ENCODE measurements at regions of chr13 and their contacts with region 1.

Region 1: GRCh38 chr13:25286969-25287961 is at the start of gene MTMR6:
- DNase-seq: peak; percentile 73
- ATAC-seq: peak; percentile 98
- H3K4me3 ChIP-seq: peak within 1 kb of the TSS; percentile 90 to 98 (median 92)
- H3K27ac ChIP-seq: peak within 1 kb of the TSS; percentile 70
- H3K4me1 ChIP-seq: peaks cover 28% of the 10 kb centered on the region
- H3K27me3 ChIP-seq: peaks cover 0 to 16% of the 10 kb centered on the region in 2 experiments; a peak in 1 of 5 replicates
- CTCF ChIP-seq: peak; percentile 98
- EP300 ChIP-seq: no peak
- POLR2A ChIP-seq: peak; percentile 50 to 51; a peak in 2 of 4 replicates
- RAD21 ChIP-seq: peak; percentile 76
- total RNA-seq, gene MTMR6: 7.8 and 12.5 TPM in 2 replicates

Region 2: GRCh38 chr13:24491845-24492244 is 795.4 kb before region 1 on chr13:
- CTCF ChIA-PET with region 1: no interaction called
- POLR2A ChIA-PET with region 1: no interaction called
- in situ Hi-C with region 1: no loop called
- intact Hi-C with region 1: no loop called
- DNase-seq: no peak
- ATAC-seq: no peak
- H3K4me3 ChIP-seq: no peak overlapping the region
- H3K27ac ChIP-seq: no peak overlapping the region
- H3K4me1 ChIP-seq: no peaks in the 10 kb centered on the region
- H3K27me3 ChIP-seq: no peaks in the 10 kb centered on the region
- CTCF ChIP-seq: no peak
- EP300 ChIP-seq: no peak
- POLR2A ChIP-seq: no peak
- RAD21 ChIP-seq: no peak

Region 3: DNA sequence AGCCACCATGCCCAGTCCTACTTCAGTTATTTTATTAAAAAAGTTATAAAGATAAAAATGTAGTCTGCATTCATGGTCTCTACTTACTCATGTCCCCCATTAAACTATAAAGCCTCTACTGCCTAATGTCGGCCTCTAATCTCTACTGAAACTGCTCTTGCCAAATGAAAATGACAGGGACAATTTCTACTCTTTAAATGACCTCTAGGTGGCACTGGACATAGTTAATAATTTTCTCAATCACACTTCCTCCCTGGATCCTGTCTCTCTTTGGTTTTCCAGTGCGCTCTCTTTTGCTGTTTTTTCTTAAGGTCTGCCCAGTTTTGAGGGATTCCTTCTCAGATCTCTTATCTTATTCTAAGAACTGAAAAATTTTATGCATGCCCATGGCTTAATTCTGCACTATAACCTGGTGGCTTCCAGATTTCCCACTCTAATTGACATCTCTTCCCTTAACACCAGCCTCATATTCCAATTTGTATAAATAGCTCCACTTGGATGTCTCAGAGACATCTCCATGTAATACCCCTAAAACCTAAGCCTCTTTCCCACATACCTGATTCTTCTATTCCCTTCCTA is 54.2 kb before region 1 on chr13:
- CTCF ChIA-PET with region 1: no interaction called
- POLR2A ChIA-PET with region 1: no interaction called
- in situ Hi-C with region 1: no loop called
- intact Hi-C with region 1: loop called (anchors 5 kb)
- DNase-seq: peak; percentile 41
- ATAC-seq: peak; percentile 88
- H3K4me3 ChIP-seq: no peak overlapping the region
- H3K27ac ChIP-seq: no peak overlapping the region
- H3K4me1 ChIP-seq: no peaks in the 10 kb centered on the region
- H3K27me3 ChIP-seq: peaks cover 0 to 20% of the 10 kb centered on the region in 2 experiments; a peak in 4 of 5 replicates
- CTCF ChIP-seq: peak; percentile 38
- EP300 ChIP-seq: no peak
- POLR2A ChIP-seq: no peak
- RAD21 ChIP-seq: no peak

Region 4: DNA sequence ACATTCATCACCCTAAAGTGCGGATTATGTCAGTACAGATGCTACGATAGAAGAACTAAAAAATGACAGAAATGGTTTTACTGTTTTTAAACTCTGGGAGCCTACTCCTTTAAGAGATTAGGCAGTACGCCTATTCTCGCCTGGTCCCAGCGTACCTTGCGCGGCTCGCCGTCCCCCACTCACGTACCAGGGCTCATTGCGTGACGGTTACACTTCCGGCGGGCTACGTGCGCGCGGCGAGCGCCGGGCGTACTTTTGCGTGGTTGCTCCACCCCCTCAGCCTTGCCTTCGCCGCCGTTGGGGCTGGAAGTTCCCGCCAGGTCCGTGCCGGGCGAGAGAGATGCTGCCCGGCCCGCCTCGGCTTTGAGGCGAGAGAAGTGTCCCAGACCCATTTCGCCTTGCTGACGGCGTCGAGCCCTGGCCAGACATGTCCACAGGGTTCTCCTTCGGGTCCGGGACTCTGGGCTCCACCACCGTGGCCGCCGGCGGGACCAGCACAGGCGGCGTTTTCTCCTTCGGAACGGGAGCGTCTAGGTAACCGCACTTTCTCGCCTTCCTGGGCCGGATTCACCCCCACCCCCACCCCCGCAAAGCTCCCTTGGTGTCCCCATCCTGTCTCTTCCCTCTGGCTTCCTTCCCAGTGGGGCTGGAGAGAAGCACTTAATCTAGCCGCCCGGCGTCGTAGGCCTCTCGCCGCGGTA is 14.2 kb after region 1 on chr13 and contains the start of gene NUP58:
- CTCF ChIA-PET with region 1: no interaction called
- POLR2A ChIA-PET with region 1: interaction called, 3 read pairs
- in situ Hi-C with region 1: no loop called
- intact Hi-C with region 1: loop called (anchors 1 kb)
- DNase-seq: peak; percentile 84
- ATAC-seq: peak; percentile 100
- H3K4me3 ChIP-seq: peak within 1 kb of the TSS; percentile 85 to 96 (median 89)
- H3K27ac ChIP-seq: peak within 1 kb of the TSS; percentile 80
- H3K4me1 ChIP-seq: peaks cover 45% of the 10 kb centered on the region
- H3K27me3 ChIP-seq: no peaks in the 10 kb centered on the region; a peak in 1 of 5 replicates
- CTCF ChIP-seq: 0 out of 2 replicates have a peak, but pooled peaks have one; percentile 6
- EP300 ChIP-seq: no peak
- POLR2A ChIP-seq: peak; percentile 87
- RAD21 ChIP-seq: no peak
- total RNA-seq, gene NUP58: 46.5 and 66.0 TPM in 2 replicates

Measured in HepG2 (cell line).